HEK293 (cell line): ENCODE measurements at regions of chr19 and their contacts with region 1.

Region 1: DNA sequence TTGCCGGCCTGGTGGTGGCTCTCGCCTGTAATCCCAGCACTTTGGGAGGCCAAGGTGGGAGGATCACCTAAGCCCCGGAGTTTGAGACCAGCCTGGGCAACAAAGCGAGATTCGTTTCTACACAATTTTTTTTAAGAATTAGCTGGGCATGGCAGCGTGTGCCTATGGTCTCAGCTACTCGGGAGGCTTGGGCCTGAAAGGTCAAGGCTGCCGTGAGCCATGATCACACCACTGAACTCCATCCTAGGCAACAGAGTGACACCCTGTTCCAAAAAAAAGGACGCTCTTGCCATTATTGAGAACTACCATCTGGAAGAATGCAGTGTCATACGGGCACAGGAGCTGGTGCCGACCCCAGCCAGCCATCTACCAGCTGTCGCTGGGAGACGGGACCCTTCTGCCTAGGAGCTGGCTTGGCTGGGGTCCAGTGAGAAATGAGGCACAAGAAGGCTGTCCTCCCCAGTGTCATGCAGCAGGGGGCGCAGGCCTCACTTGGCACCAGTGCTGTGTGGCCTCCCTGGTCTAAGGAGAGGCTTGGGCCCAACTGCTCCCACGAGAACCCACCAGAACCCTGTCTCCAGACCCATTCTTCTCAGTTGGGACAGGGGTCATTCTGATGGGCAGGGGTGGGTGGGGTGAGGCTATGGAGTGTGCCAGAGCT is 12.2 kb upstream of the RELB start:
- H3K4me3 ChIP-seq: no peak overlapping the region
- H3K27ac ChIP-seq: no peak overlapping the region
- H3K4me1 ChIP-seq: no peaks in the 10 kb centered on the region
- CTCF ChIP-seq: peak; percentile 66; the same call in 1 of the 2 replicates

Region 2: GRCh38 chr19:44752816-44753618 is 236.0 kb before region 1 on chr19:
- CTCF ChIA-PET with region 1: no interaction called
- POLR2A ChIA-PET with region 1: no interaction called
- H3K4me3 ChIP-seq: peak overlapping the region; percentile 16; the same call in 1 of the 2 replicates
- H3K27ac ChIP-seq: no peak overlapping the region
- H3K4me1 ChIP-seq: peaks cover 19% of the 10 kb centered on the region
- CTCF ChIP-seq: 0 out of 2 replicates have a peak, but pooled peaks have one; percentile 17

Region 3: GRCh38 chr19:44974857-44975256 is 14.2 kb before region 1 on chr19:
- CTCF ChIA-PET with region 1: interaction called, 13 read pairs
- POLR2A ChIA-PET with region 1: no interaction called
- H3K4me3 ChIP-seq: no peak overlapping the region
- H3K27ac ChIP-seq: no peak overlapping the region
- H3K4me1 ChIP-seq: no peaks in the 10 kb centered on the region
- CTCF ChIP-seq: no peak

Region 4: DNA sequence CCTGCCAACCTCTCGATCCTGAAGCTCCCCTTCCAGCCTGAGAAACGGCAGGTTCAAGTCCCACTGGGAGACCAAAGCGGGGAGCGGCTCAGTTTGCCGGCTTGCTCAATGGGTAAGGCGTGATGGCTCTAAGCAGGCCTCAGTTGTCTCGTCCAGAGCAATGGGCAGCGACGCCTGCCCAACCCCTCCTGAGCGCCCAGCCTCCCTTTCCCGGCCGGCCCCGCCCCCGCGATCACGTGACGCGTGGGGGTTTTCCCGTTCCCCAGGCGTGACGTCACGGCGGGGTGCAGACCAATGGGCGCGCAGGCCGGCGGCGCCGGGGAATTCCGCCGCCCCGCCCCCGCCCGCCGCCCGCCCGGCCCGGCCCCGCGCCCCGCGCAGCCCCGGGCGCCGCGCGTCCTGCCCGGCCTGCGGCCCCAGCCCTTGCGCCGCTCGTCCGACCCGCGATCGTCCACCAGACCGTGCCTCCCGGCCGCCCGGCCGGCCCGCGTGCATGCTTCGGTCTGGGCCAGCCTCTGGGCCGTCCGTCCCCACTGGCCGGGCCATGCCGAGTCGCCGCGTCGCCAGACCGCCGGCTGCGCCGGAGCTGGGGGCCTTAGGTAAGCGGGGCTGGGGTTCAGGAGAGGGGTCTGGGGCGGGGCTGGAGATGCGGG is 12.2 kb after region 1 on chr19 and contains the start of gene RELB:
- CTCF ChIA-PET with region 1: interaction called, 22 read pairs
- POLR2A ChIA-PET with region 1: interaction called, 11 read pairs
- H3K4me3 ChIP-seq: peak within 1 kb of the TSS; percentile 69
- H3K27ac ChIP-seq: peak within 1 kb of the TSS; percentile 76
- H3K4me1 ChIP-seq: peaks cover 2% of the 10 kb centered on the region; the same call in 1 of the 2 replicates
- CTCF ChIP-seq: no peak

Region 5: GRCh38 chr19:45059278-45059965 is 70.4 kb after region 1 on chr19:
- CTCF ChIA-PET with region 1: interaction called, 18 read pairs
- POLR2A ChIA-PET with region 1: no interaction called
- H3K4me3 ChIP-seq: no peak overlapping the region
- H3K27ac ChIP-seq: no peak overlapping the region
- H3K4me1 ChIP-seq: no peaks in the 10 kb centered on the region
- CTCF ChIP-seq: peak; percentile 81; the same call in 1 of the 2 replicates

Region 6: GRCh38 chr19:45245334-45245787 is 256.3 kb after region 1 on chr19 and contains the start of gene EXOC3L2:
- CTCF ChIA-PET with region 1: no interaction called
- POLR2A ChIA-PET with region 1: no interaction called
- H3K4me3 ChIP-seq: no peak within 1 kb of the TSS
- H3K27ac ChIP-seq: no peak within 1 kb of the TSS
- H3K4me1 ChIP-seq: no peaks in the 10 kb centered on the region
- CTCF ChIP-seq: no peak

Region 7: GRCh38 chr19:45306518-45307027 is 317.5 kb after region 1 on chr19:
- CTCF ChIA-PET with region 1: no interaction called
- POLR2A ChIA-PET with region 1: no interaction called
- H3K4me3 ChIP-seq: no peak overlapping the region
- H3K27ac ChIP-seq: no peak overlapping the region
- H3K4me1 ChIP-seq: no peaks in the 10 kb centered on the region
- CTCF ChIP-seq: no peak